Right ventricle myocardium inferior (tissue), 1 donor: ENCODE measurements at regions of chr10 and their contacts with region 1.

Region 1: DNA sequence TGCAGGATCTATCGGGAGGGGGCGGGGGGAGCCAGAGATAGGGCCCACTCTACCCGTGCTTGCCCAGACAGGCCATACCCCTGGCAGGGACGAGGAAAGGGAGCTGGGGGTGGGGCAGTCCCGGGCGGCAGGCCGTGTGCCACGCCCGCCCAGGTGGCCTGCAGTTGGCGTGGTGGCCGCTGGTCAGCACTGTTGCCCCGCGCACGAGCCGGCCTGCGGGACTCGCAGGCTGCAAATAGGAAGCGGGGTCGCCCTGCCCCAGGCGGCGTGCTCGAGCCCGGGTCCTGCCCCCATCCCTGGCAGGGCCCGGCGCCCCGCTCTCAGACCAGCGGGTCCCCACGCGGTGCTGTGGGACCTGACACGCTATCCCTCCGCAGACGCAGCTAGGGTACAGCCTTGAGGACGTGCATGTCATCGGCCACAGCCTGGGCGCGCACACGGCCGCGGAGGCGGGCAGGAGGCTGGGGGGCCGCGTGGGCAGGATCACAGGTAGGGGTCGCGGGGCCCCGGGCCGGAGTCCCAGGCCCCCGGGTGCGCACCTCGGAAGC is 6.7 kb downstream of the PNLIPRP2 start:
- DNase-seq: no peak
- ATAC-seq: peak; percentile 68

Region 2: GRCh38 chr10:116787893-116788665 is 160.6 kb after region 1 on chr10:
- intact Hi-C with region 1: loop called (anchors 2 kb)
- DNase-seq: peak; percentile 89
- ATAC-seq: peak; percentile 77